Breast epithelium (tissue), 4 donors: ENCODE measurements at regions of chr18 and their contacts with region 1.

Region 1: GRCh38 chr18:27605107-27605834 is 420.2 kb upstream of the CHST9 start:
- DNase-seq: peak in 1 of 2 donors; percentile 34
- H3K4me3 ChIP-seq: no peak overlapping the region
- H3K27ac ChIP-seq: no peak overlapping the region
- H3K4me1 ChIP-seq: no peaks in the 10 kb centered on the region
- H3K27me3 ChIP-seq: no peaks in the 10 kb centered on the region
- CTCF ChIP-seq: peak; percentile 36 to 59 (median 57)
- POLR2A ChIP-seq: no peak

Region 2: GRCh38 chr18:26827581-26827980 is 777.7 kb before region 1 on chr18:
- intact Hi-C with region 1: loop called (anchors 10 kb)
- DNase-seq: no peak
- H3K4me3 ChIP-seq: no peak overlapping the region
- H3K27ac ChIP-seq: no peak overlapping the region
- H3K4me1 ChIP-seq: no peaks in the 10 kb centered on the region
- H3K27me3 ChIP-seq: no peaks in the 10 kb centered on the region
- CTCF ChIP-seq: no peak
- POLR2A ChIP-seq: no peak

Region 3: GRCh38 chr18:27636576-27637085 is 31.4 kb after region 1 on chr18:
- intact Hi-C with region 1: no loop called
- DNase-seq: no peak
- H3K4me3 ChIP-seq: no peak overlapping the region
- H3K27ac ChIP-seq: no peak overlapping the region
- H3K4me1 ChIP-seq: no peaks in the 10 kb centered on the region
- H3K27me3 ChIP-seq: no peaks in the 10 kb centered on the region
- CTCF ChIP-seq: no peak
- POLR2A ChIP-seq: no peak

Region 4: DNA sequence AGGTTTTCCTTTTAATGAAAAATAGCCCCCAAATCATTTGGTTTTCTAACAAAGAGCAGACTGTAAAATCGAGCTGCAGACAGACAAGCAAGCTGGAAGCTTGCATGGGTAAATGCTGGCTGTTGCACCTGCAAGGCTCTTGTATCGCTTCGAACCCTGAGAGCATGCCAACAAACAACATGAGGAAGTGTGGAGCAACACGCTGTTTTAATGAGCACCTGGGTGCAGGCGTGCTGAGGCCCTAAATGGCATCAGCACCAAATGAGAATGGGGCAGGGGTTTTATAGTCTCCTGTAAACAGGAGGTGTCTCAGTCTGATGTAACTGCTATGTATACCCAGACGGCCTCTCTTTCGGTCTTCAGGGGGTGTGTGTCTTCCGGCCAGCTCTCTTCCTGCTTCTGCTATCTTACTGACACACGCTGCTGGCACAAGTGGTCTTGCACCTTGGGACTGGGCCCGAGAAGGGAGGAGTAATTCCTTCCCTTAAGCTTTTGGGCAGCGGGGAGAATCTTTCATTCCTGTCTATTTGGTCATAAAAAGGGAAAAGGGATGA is 603.5 kb after region 1 on chr18:
- intact Hi-C with region 1: loop called (anchors 5 kb)
- DNase-seq: no peak
- H3K4me3 ChIP-seq: no peak overlapping the region
- H3K27ac ChIP-seq: no peak overlapping the region
- H3K4me1 ChIP-seq: no peaks in the 10 kb centered on the region
- H3K27me3 ChIP-seq: no peaks in the 10 kb centered on the region
- CTCF ChIP-seq: no peak
- POLR2A ChIP-seq: no peak